ENCODE measurements at regions of chr15 and their contacts with region 1.

Region 1: DNA sequence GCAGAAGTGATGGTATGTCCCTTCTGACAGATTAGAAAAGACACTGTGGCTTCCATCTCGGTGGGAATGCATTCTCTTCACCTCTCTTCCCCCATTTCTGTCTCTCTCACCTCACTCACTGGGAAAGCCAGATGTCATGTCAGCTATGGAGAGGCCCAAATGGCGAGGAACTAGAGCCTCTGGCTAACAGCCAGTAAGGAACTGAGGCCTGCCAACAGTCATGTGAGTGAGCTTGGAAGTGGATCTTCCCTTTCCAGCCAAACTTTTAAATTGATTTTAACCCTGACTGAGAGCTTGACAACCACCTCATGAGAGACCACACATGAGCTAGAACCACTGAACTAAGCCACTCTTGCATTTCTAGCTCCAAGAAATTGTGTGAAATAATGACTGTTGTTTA is 35.2 kb upstream of the CDAN1 start:
- DNase-seq: peak; percentile 8 to 62
- ATAC-seq: peak in 1 of 2 donors; percentile 82
- H3K4me3 ChIP-seq: no peak overlapping the region
- H3K27ac ChIP-seq: peak overlapping the region in 1 of 4 donors; percentile 14
- H3K4me1 ChIP-seq: peaks cover 6 to 28% of the 10 kb centered on the region in 2 donors
- H3K27me3 ChIP-seq: no peaks in the 10 kb centered on the region
- CTCF ChIP-seq: no peak
- POLR2A ChIP-seq: no peak

Region 2: DNA sequence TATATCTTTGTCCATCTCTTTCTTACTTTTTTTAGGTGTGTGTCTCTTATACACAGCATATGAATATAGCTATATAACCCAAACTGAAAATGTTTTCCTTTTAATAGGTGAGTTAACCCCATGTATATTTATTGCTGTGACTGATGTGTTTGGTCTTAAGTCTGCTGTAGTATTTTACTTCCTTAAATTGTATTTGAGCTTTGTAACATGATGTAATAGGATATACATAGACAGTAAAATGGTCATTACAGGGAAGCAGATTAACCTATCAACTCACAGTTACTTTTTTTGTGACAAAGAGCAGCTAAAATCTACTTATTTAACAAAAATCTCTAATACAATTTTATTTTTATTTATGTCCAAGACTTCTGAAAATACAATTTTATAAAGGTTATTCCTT is 16.6 kb after region 1 on chr15:
- in situ Hi-C with region 1: no loop called
- intact Hi-C with region 1: loop called (anchors 1 kb)
- DNase-seq: no peak
- ATAC-seq: no peak
- H3K4me3 ChIP-seq: no peak overlapping the region
- H3K27ac ChIP-seq: no peak overlapping the region
- H3K4me1 ChIP-seq: no peaks in the 10 kb centered on the region
- H3K27me3 ChIP-seq: no peaks in the 10 kb centered on the region
- CTCF ChIP-seq: no peak
- POLR2A ChIP-seq: no peak

Measured in gastrocnemius medialis (tissue), 4 donors.